MCF 10A (cell line): ENCODE measurements at regions of chr22 and their contacts with region 1.

Region 1: DNA sequence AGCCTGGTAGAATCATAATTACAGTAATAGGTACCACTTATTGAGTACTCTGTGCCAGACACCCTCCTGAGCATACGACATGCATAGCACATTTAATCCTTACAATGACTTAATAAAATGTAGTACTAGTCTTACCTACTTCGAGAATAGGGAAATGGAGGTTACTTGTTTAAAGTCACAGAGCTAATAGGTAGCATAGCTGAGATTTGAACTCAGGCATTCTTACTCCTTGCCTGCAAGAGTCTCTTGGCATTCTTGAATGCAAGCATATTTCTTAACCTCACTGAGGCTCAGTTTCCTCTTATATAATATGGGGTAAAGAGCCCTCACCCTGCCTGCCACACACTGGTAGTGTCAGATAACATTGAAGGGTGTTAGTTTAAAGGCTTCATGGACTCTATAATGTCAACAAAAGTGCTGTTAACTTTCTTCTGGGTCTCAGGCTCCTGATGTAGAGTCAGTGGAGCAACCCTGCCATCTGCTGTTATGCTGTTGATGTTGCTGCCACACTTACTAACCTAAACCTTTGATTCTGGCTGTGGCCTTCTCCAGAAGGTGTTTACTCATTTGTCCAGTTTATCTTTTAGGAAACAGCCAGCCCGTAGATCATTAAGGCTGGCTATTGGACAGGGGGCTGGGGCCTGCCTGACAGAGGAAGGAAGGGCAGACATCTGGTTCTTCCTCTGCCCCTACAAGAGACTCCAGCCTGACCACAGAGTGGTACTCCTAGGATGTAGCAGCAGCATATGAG is 18.9 kb downstream of the LIMK2 start:
- DNase-seq: peak; percentile 47
- H3K4me3 Mint-ChIP-seq: no peak overlapping the region
- H3K27ac Mint-ChIP-seq: peak overlapping the region; percentile 46
- H3K4me1 Mint-ChIP-seq: peaks cover 12% of the 10 kb centered on the region
- H3K27me3 Mint-ChIP-seq: no peaks in the 10 kb centered on the region
- CTCF ChIP-seq: peak; percentile 57

Region 2: DNA sequence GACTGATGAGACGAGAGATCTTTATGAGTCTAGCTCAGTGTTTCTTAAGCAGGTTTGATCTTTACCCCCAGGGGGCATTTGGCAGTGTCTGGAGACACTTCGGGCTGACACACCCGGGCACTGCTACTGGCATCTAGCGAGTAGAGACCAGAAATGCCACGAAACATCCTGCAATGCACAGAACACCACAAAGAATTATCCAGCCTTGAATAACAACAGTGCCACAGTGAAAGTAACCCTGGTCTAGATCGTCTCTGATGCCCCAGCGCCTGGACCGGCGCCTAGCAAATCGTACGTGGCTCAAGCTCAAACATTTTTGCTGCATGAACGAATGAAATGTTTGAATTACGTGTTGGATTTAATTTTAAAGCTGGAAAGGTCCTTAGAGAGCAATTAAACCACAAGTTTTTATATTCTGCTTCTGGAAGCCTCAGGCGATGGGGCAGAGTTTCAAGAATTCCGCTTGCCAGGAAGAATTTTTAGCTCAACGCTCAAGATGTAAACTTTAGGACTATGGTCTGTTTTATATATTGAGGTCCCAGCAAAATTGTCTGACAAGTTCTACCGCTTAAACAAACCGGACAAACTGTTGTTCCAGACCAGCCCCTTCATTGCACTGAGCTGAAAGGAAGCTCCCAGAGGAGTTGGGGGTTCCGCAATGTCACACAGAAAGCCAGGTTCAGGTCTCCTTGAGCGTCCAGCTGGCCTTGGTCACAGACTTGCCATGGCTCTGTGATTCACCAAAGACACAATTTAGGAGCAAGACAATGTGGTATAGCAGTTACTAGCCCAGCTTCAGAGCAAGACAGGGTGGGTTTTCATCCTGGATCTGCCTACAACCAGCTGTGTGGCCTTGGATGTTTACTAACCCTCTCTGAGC is 194.1 kb before region 1 on chr22:
- CTCF ChIA-PET with region 1: interaction called, 10 read pairs
- POLR2A ChIA-PET with region 1: no interaction called
- intact Hi-C with region 1: no loop called
- DNase-seq: peak; percentile 78
- H3K4me3 Mint-ChIP-seq: peak overlapping the region; percentile 46
- H3K27ac Mint-ChIP-seq: peak overlapping the region; percentile 11
- H3K4me1 Mint-ChIP-seq: peaks cover 14% of the 10 kb centered on the region
- H3K27me3 Mint-ChIP-seq: no peaks in the 10 kb centered on the region
- CTCF ChIP-seq: no peak

Region 3: DNA sequence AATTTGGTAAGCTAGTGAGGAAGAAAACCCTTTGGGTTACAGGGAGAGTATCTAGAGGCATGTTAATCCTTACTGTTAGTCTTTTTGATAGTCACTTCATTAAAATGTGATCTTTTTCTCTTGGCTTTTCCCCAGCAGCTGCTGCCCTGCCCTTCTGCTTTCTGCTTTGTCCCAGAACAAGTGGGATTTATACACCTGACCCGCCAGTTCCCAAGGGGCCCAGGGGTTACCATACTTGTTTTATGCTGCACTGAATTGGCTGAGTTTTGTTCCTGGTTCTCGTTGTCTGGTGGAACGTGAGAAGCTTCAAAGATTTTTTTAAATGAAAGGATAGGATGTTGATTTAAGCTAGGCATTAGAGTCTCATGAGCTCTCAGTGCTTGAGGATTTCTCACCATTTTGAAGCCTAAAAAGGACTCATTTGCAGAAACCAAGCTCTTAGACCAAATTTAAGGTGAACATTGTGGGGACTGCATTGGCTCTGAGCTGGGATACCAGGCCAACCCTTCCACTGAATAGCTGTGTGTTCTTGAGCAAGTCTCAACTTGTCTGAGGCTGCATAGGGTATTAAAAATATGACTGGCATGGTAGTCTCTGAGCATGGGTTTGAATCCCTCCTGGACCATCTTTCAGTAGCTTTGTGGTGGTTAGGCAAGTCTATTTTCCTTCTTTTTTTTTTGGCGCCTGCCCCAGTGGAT is 12.3 kb before region 1 on chr22:
- CTCF ChIA-PET with region 1: interaction called, 55 read pairs
- POLR2A ChIA-PET with region 1: interaction called, 22 read pairs
- intact Hi-C with region 1: no loop called
- DNase-seq: peak; percentile 39
- H3K4me3 Mint-ChIP-seq: no peak overlapping the region
- H3K27ac Mint-ChIP-seq: peak overlapping the region; percentile 94
- H3K4me1 Mint-ChIP-seq: peaks cover 16% of the 10 kb centered on the region
- H3K27me3 Mint-ChIP-seq: no peaks in the 10 kb centered on the region
- CTCF ChIP-seq: no peak